PC-9 (cell line): ENCODE measurements at regions of chr22 and their contacts with region 1.

Region 1: DNA sequence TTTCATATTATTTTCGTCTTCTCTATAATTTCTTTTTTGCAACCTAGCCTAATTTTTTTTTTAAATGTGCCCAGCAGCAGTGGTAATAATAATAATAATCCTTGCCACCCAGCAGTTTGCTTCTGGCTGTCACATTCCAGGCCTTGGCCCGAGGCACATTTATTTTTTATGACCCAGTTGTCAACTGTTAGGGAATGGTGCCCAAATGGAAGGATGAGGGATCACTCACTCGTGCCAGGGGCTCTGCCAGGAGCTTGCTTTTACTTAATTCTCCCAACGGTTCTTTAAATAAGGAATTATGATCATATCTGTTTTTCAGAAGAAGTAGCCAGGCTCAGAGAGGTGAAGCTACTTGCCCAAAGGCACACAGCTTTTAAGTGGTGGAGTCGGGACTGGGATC is 49.6 kb downstream of the MYO18B start:
- DNase-seq: no peak
- H3K4me3 ChIP-seq: no peak overlapping the region
- H3K27ac ChIP-seq: no peak overlapping the region
- H3K4me1 ChIP-seq: no peaks in the 10 kb centered on the region
- H3K27me3 ChIP-seq: peaks cover 49% of the 10 kb centered on the region
- CTCF ChIP-seq: no peak

Region 2: GRCh38 chr22:25777870-25778269 is 13.7 kb before region 1 on chr22:
- CTCF ChIA-PET with region 1: no interaction called
- POLR2A ChIA-PET with region 1: no interaction called
- intact Hi-C with region 1: no loop called
- DNase-seq: no peak
- H3K4me3 ChIP-seq: no peak overlapping the region
- H3K27ac ChIP-seq: no peak overlapping the region
- H3K4me1 ChIP-seq: no peaks in the 10 kb centered on the region
- H3K27me3 ChIP-seq: peaks cover 48% of the 10 kb centered on the region
- CTCF ChIP-seq: peak; percentile 46

Region 3: DNA sequence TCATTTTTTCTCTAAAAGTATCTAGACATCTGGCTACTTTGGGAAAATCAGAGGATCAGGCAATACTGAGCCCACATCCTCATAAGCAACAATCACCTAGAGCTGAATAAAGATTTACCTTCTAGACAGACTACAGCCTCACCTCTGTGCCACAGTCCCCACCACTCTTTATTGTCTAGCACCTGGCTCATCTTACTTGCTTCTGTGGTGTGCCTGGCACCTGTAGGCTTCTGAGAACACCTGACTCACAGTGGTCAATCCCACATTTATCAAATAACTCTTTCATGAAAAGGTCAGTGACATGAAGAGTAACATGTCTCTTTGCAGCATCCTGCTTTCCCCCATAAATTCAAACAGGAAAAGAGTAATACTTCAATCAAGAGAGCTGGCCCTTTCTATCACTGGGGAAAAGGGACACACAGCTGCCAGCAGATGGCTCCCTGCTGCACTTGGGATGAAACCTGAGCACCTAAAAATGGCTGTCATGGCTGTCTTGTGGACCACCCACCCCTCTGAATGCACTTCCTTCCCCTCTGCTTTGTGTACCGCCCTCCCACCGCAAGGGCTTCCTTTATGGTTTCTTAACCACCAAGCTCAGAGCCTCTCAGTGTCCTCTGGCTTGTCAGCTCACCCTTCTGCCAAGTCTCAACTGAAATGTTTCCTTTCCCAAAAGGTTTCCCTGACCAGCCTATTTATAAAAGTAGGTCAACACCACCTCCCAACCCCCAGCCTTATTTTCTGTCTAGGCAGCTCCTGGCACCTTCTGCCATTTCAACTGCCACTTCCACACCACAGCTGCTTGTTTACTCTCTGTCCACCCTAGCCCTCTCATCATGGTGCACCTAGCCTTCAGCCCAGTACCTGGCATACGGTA is 711.4 kb after region 1 on chr22:
- CTCF ChIA-PET with region 1: interaction called, 11 read pairs
- POLR2A ChIA-PET with region 1: no interaction called
- intact Hi-C with region 1: no loop called
- DNase-seq: no peak
- H3K4me3 ChIP-seq: no peak overlapping the region
- H3K27ac ChIP-seq: no peak overlapping the region
- H3K4me1 ChIP-seq: no peaks in the 10 kb centered on the region
- H3K27me3 ChIP-seq: no peaks in the 10 kb centered on the region
- CTCF ChIP-seq: peak; percentile 58; the same call in 1 of the 2 replicates